Stomach (tissue), 19 donors: ENCODE measurements at regions of chr22 and their contacts with region 1.

Region 1: DNA sequence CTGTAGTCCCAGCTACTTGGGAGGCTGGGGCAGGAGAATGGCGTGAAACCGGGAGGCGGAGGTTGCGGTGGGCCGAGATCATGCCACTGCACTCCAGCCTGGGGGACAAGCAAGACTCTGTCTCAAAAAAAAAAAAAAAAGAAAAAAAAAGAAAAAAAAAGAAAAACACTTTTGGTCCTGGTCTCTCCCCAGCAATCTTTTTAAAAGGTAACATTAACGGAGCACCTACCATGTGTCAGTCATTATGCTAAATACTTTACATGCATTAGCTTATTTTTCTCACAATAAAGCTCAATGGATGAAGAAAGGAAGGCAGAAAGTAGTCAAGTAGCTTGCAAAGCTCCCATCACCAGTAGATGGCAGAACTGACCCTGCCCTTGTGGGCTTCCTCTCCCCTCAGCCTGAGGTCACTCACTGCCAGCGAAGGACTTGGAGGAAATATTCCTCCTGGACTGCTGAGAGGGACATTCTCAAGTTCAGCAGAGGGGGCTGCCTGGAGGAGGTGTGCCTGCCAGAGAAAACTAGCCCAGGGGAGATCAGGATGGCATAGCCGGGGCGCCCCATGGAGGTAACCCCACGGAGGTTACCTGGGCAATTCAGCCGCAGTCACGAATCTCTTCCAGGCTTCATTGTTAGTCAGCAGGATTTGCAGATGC is 15.5 kb downstream of the APOL3 start:
- DNase-seq: peak; percentile 70 to 88
- H3K4me3 ChIP-seq: no peak overlapping the region
- H3K27ac ChIP-seq: peak overlapping the region in 3 of 5 donors; percentile 8 to 46 (median 34)
- H3K4me1 ChIP-seq: peaks cover 3 to 33% (median 14%) of the 10 kb centered on the region in 4 donors
- H3K27me3 ChIP-seq: no peaks in the 10 kb centered on the region
- CTCF ChIP-seq: peak in 5 of 7 experiments; percentile 59 to 80 (median 71)
- EP300 ChIP-seq: no peak
- POLR2A ChIP-seq: no peak

Region 2: DNA sequence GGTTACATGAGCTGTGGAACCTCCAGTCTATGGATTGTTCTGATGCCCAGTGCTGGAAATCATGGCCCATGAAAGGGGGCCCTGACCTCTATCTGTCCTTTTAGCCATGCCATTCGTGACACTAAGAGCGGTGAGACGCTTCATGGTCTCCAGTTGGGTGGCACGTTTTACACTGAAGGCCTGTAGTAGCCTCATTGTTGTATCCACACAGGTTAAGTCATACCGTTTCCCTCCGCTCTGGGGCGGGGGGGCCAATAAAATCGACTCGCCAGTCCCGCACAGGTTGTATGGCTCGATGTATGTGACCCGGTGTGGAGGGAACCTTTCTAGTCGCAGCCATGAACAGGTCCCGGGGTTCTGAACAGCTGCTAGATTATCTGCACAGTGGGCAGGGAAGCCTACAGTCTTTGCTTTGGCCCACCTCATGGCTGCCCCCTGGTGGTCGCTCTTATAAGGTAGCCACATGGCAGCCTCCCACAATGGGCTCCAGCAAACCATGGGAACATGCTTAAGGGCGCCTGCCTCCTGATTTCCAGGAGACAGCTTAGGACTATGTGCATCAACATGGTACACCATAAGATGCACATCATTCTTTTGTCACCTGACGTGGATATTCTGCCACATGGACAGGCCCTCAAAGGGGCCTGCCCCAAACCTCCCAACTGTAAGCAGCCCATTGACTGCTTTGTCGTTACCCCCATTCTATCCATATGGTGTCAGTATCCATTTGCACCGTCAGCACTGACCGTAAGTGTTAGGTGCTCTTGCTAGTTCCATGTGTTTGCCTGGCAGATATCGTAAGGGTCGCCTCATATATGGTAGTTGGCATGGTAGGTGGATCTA is 35.2 kb after region 1 on chr22:
- intact Hi-C with region 1: loop called (anchors 5 kb)
- DNase-seq: peak; percentile 89 to 91
- H3K4me3 ChIP-seq: no peak overlapping the region
- H3K27ac ChIP-seq: no peak overlapping the region
- H3K4me1 ChIP-seq: peaks cover 0 to 15% (median 3%) of the 10 kb centered on the region in 4 donors
- H3K27me3 ChIP-seq: no peaks in the 10 kb centered on the region
- CTCF ChIP-seq: peak in 5 of 7 experiments; percentile 77 to 90 (median 89)
- EP300 ChIP-seq: no peak
- POLR2A ChIP-seq: no peak

Region 3: DNA sequence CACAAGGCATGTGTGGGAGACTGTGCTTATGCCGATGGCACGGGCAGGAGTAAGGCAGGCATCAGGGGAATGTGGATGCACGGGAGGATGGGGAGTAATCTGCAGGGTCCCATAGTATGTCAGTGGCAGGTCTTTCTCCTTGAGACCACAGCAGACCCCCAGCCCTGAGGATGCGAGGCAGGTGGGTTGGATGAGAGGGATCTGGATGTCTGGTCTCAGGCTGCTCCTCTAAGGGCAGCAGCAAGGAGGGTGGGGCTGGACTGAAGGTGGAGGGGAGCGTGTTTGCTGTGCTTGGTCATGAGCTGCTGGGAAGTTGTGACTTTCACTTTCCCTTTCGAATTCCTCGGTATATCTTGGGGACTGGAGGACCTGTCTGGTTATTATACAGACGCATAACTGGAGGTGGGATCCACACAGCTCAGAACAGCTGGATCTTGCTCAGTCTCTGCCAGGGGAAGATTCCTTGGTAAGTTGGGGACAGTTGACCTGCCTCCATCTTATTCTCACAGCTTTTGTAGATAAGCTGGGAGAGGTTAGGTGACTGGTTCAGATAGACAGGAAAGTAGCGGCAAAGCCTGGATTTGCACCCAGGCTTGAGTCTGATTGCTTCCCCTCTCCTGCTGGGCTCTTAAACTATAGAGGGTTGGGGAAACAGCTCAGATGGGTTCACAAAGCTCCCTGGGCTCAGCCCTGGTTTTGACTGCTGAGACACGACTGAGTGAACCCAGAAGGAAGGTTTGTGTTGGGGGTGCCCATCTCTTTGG is 107.9 kb after region 1 on chr22 and contains the start of gene APOL1:
- intact Hi-C with region 1: no loop called
- DNase-seq: peak; percentile 63 to 86
- H3K4me3 ChIP-seq: peak within 1 kb of the TSS; percentile 51 to 72 (median 52)
- H3K27ac ChIP-seq: peak within 1 kb of the TSS; percentile 58 to 91 (median 84)
- H3K4me1 ChIP-seq: peaks cover 26 to 57% (median 40%) of the 10 kb centered on the region in 4 donors
- H3K27me3 ChIP-seq: no peaks in the 10 kb centered on the region
- CTCF ChIP-seq: no peak
- EP300 ChIP-seq: no peak
- POLR2A ChIP-seq: no peak
- total RNA-seq, gene APOL1: 5.2 to 87.5 (median 38.2) TPM